CD8-positive, alpha-beta T cell (primary cell): ENCODE measurements at regions of chr15 and their contacts with region 1.

Region 1: GRCh38 chr15:88620995-88621772 is at the start of gene AEN:
- DNase-seq: peak; percentile 90 to 97 (median 93)
- ATAC-seq: peak; percentile 81
- H3K4me3 ChIP-seq: peak within 1 kb of the TSS; percentile 64 to 85
- H3K4me3 Mint-ChIP-seq: peak within 1 kb of the TSS; percentile 84
- H3K27ac ChIP-seq: peak within 1 kb of the TSS; percentile 61 to 75
- H3K27ac Mint-ChIP-seq: peak within 1 kb of the TSS; percentile 93
- H3K4me1 ChIP-seq: peaks cover 42% of the 10 kb centered on the region
- H3K4me1 Mint-ChIP-seq: peaks cover 49% of the 10 kb centered on the region
- H3K27me3 ChIP-seq: no peaks in the 10 kb centered on the region
- H3K27me3 Mint-ChIP-seq: peaks cover 2% of the 10 kb centered on the region
- CTCF ChIP-seq: no peak
- total RNA-seq, gene AEN: 26.9 to 27.7 TPM

Region 2: GRCh38 chr15:88467073-88467934 is 153.9 kb before region 1 on chr15 and contains the starts of genes MRPL46 and MRPS11:
- CTCF ChIA-PET with region 1: interaction called, 3 read pairs
- POLR2A ChIA-PET with region 1: interaction called, 3 read pairs
- intact Hi-C with region 1: loop called (anchors 1 to 2 kb)
- DNase-seq: peak; percentile 81 to 94 (median 89)
- ATAC-seq: peak; percentile 91
- H3K4me3 ChIP-seq: peak within 1 kb of the TSS; percentile 57 to 92
- H3K4me3 Mint-ChIP-seq: peak within 1 kb of the TSS; percentile 98
- H3K27ac ChIP-seq: peak within 1 kb of the TSS; percentile 90 to 98
- H3K27ac Mint-ChIP-seq: peak within 1 kb of the TSS; percentile 99
- H3K4me1 ChIP-seq: peaks cover 17% of the 10 kb centered on the region
- H3K4me1 Mint-ChIP-seq: peaks cover 27% of the 10 kb centered on the region
- H3K27me3 ChIP-seq: no peaks in the 10 kb centered on the region
- H3K27me3 Mint-ChIP-seq: no peaks in the 10 kb centered on the region
- CTCF ChIP-seq: no peak
- total RNA-seq, gene MRPL46: 11.8 to 12.6 TPM
- total RNA-seq, gene MRPS11: 7.4 to 9.6 TPM

Region 3: GRCh38 chr15:88563638-88564037 is 57.5 kb before region 1 on chr15:
- CTCF ChIA-PET with region 1: no interaction called
- POLR2A ChIA-PET with region 1: no interaction called
- intact Hi-C with region 1: no loop called
- DNase-seq: no peak
- ATAC-seq: no peak
- H3K4me3 ChIP-seq: no peak overlapping the region
- H3K4me3 Mint-ChIP-seq: no peak overlapping the region
- H3K27ac ChIP-seq: no peak overlapping the region
- H3K27ac Mint-ChIP-seq: no peak overlapping the region
- H3K4me1 ChIP-seq: no peaks in the 10 kb centered on the region
- H3K4me1 Mint-ChIP-seq: no peaks in the 10 kb centered on the region
- H3K27me3 ChIP-seq: peaks cover 0 to 2% of the 10 kb centered on the region in 2 experiments
- H3K27me3 Mint-ChIP-seq: peaks cover 3% of the 10 kb centered on the region
- CTCF ChIP-seq: no peak

Region 4: DNA sequence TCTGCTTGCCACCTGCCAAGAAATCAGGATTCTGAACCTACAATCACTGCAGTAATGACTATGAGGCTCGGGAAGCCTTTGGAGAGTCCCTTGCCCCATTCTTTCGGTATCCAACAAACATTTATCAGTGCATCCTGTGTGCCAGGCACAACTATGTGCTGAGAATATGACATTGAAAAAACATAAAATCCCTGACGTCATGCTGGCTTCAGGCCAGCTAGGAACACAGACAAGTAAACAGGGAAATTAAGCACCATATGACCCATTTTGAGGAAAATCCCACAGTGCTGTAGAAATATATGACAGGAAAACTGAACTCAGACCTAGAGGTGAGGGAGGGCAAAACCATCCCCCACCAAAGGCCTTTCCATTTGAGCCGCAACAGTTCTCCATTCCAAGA is 40.7 kb before region 1 on chr15:
- CTCF ChIA-PET with region 1: no interaction called
- POLR2A ChIA-PET with region 1: no interaction called
- intact Hi-C with region 1: no loop called
- DNase-seq: no peak
- ATAC-seq: no peak
- H3K4me3 ChIP-seq: no peak overlapping the region
- H3K4me3 Mint-ChIP-seq: no peak overlapping the region
- H3K27ac ChIP-seq: no peak overlapping the region
- H3K27ac Mint-ChIP-seq: no peak overlapping the region
- H3K4me1 ChIP-seq: no peaks in the 10 kb centered on the region
- H3K4me1 Mint-ChIP-seq: no peaks in the 10 kb centered on the region
- H3K27me3 ChIP-seq: no peaks in the 10 kb centered on the region
- H3K27me3 Mint-ChIP-seq: no peaks in the 10 kb centered on the region
- CTCF ChIP-seq: no peak

Region 5: DNA sequence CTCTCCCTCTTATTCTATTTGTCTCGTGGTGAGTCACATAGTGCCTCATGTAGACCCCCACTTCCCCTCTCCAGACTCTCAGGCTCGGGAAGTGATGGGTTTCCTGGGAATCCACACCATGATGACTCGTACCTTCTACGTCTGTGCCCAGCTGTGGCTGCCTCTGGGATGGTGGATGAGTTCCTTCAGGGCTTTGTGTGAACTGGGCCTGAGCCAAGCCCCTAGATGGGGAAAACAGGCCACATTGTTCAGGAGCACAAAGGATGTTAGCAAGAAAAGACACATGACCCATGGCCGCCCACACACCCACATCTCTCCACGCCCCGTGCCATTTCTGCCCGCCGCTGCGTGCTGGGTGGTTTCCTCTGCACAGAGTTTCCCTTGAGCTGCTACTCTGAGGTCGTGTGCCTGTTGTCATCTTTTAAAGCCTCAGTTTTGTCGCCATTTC is 28.1 kb after region 1 on chr15:
- CTCF ChIA-PET with region 1: interaction called, 114 read pairs
- POLR2A ChIA-PET with region 1: interaction called, 5 read pairs
- intact Hi-C with region 1: no loop called
- DNase-seq: peak; percentile 33 to 85 (median 71)
- ATAC-seq: peak; percentile 86
- H3K4me3 ChIP-seq: peak overlapping the region in 1 of 2 experiments; percentile 10
- H3K4me3 Mint-ChIP-seq: peak overlapping the region; percentile 77
- H3K27ac ChIP-seq: peak overlapping the region; percentile 48 to 83
- H3K27ac Mint-ChIP-seq: peak overlapping the region; percentile 99
- H3K4me1 ChIP-seq: peaks cover 91% of the 10 kb centered on the region
- H3K4me1 Mint-ChIP-seq: peaks cover 90% of the 10 kb centered on the region
- H3K27me3 ChIP-seq: no peaks in the 10 kb centered on the region
- H3K27me3 Mint-ChIP-seq: no peaks in the 10 kb centered on the region
- CTCF ChIP-seq: no peak

Region 6: DNA sequence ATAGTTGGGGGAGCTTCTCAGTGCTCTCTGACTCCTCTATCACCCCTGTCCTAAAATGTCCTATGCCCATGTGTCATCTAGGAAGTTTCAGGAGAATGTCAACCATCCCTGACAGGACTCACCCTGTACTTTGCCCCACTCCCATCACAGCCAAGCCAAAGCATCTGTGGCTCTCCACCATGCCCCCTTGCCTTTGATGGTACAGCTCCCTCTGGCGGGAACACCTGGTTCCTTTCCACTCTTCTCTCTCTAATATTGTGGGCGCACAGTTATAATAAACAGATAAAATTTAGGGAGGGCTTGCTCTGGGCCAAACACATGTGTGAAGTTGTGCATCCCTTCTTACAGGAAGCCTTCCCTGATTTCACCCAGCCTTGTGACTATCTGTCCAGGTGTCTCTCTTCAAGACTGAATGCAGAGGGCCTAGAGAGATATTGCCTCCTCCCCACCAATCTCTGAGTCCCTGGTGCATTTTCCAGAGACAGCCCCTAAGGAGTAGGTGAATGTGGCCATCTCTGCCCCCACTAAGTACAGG is 80.4 kb after region 1 on chr15:
- CTCF ChIA-PET with region 1: interaction called, 4 read pairs
- POLR2A ChIA-PET with region 1: no interaction called
- intact Hi-C with region 1: loop called (anchors 1 kb)
- DNase-seq: peak in 5 of 9 experiments; percentile 4 to 48 (median 24)
- ATAC-seq: no peak
- H3K4me3 ChIP-seq: no peak overlapping the region
- H3K4me3 Mint-ChIP-seq: no peak overlapping the region
- H3K27ac ChIP-seq: no peak overlapping the region
- H3K27ac Mint-ChIP-seq: no peak overlapping the region
- H3K4me1 ChIP-seq: peaks cover 5% of the 10 kb centered on the region
- H3K4me1 Mint-ChIP-seq: peaks cover 12% of the 10 kb centered on the region
- H3K27me3 ChIP-seq: peaks cover 0 to 6% of the 10 kb centered on the region in 2 experiments
- H3K27me3 Mint-ChIP-seq: peaks cover 15% of the 10 kb centered on the region
- CTCF ChIP-seq: no peak

Region 7: GRCh38 chr15:88904624-88905327 is 283.6 kb after region 1 on chr15:
- CTCF ChIA-PET with region 1: interaction called, 6 read pairs
- POLR2A ChIA-PET with region 1: no interaction called
- intact Hi-C with region 1: loop called (anchors 1 to 5 kb)
- DNase-seq: peak; percentile 90 to 97 (median 95)
- ATAC-seq: peak; percentile 98
- H3K4me3 ChIP-seq: no peak overlapping the region
- H3K4me3 Mint-ChIP-seq: peak overlapping the region; percentile 61
- H3K27ac ChIP-seq: peak overlapping the region; percentile 36 to 66
- H3K27ac Mint-ChIP-seq: peak overlapping the region; percentile 91
- H3K4me1 ChIP-seq: peaks cover 31% of the 10 kb centered on the region
- H3K4me1 Mint-ChIP-seq: peaks cover 41% of the 10 kb centered on the region
- H3K27me3 ChIP-seq: no peaks in the 10 kb centered on the region
- H3K27me3 Mint-ChIP-seq: no peaks in the 10 kb centered on the region
- CTCF ChIP-seq: peak; percentile 87

Region 8: DNA sequence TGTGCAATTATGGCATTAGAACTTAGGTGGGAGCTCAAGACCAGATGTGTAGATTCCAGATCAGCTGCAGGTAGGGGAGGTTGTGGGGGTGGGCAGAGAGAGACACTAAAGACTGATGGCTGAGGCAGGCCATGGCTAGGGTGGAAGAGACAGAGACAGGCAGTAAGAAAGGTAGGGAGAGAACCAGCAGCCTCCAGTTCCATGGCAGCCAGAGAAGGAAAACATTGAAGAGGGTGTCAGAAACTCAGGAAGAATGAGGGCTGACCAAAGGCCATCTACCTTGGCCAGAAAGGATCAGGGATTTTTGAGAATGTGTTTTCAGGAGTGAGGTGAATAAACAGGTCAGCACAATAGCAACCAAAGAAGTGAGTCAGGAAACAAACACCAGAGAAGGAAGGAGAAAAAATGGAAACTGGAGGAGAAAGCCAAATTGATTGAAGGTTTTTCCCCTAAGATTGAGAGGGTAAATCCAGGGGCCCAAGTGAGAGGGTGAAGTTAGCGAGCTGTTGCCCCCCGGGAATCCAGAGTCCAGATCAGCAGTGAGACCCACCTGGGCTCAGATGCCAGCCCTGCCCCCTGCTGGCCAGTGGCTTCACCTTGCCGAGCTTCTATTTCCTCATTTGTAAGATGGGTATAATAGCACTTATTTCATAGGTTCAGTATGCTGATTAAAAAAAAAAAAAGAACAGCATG is 508.1 kb after region 1 on chr15:
- CTCF ChIA-PET with region 1: no interaction called
- POLR2A ChIA-PET with region 1: no interaction called
- intact Hi-C with region 1: loop called in 1 of 2 experiments (anchors 2 kb)
- DNase-seq: peak; percentile 14 to 75 (median 66)
- ATAC-seq: peak; percentile 73
- H3K4me3 ChIP-seq: no peak overlapping the region
- H3K4me3 Mint-ChIP-seq: no peak overlapping the region
- H3K27ac ChIP-seq: peak overlapping the region in 1 of 2 experiments; percentile 79
- H3K27ac Mint-ChIP-seq: no peak overlapping the region
- H3K4me1 ChIP-seq: peaks cover 9% of the 10 kb centered on the region
- H3K4me1 Mint-ChIP-seq: peaks cover 23% of the 10 kb centered on the region
- H3K27me3 ChIP-seq: no peaks in the 10 kb centered on the region
- H3K27me3 Mint-ChIP-seq: no peaks in the 10 kb centered on the region
- CTCF ChIP-seq: peak; percentile 75

Region 9: DNA sequence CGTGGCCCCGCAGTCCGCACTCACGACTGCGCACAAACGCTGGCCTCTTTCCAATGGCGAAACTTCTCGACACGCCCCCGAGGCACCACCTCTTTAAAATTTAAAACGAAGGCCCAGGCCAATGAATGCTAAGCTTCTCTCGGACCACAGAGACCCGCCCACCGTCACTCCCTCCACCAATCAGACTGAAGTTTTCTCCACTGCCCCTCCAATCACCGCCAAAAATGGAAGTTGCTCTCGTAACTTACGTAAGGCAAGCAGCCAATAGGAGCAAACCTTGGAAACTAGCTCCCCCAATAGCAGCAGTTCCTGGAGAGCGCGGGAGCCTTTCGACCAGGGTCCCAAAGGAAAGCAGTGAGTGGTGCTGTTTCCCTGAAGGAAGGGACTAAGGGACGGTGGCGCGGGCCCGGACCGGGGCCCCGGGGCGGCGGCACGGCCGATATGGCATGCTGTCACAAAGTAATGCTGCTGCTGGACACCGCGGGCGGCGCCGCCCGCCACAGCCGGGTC is 954.0 kb after region 1 on chr15 and contains the start of gene TICRR:
- CTCF ChIA-PET with region 1: no interaction called
- POLR2A ChIA-PET with region 1: no interaction called
- intact Hi-C with region 1: loop called in 1 of 2 experiments (anchors 10 kb)
- DNase-seq: peak; percentile 88 to 99 (median 92)
- ATAC-seq: peak; percentile 98
- H3K4me3 ChIP-seq: peak within 1 kb of the TSS; percentile 58 to 86
- H3K4me3 Mint-ChIP-seq: peak within 1 kb of the TSS; percentile 82
- H3K27ac ChIP-seq: no peak within 1 kb of the TSS
- H3K27ac Mint-ChIP-seq: peak within 1 kb of the TSS; percentile 13
- H3K4me1 ChIP-seq: peaks cover 6% of the 10 kb centered on the region
- H3K4me1 Mint-ChIP-seq: peaks cover 11% of the 10 kb centered on the region
- H3K27me3 ChIP-seq: no peaks in the 10 kb centered on the region
- H3K27me3 Mint-ChIP-seq: peaks cover 11% of the 10 kb centered on the region
- CTCF ChIP-seq: no peak
- total RNA-seq, gene TICRR: 0.11 TPM in 1 of 2 experiments, not detected in the other